Common myeloid progenitor, CD34-positive (primary cell): ENCODE measurements at regions of chr1 and their contacts with region 1.

Region 1: GRCh38 chr1:23367791-23368561 is 1.7 kb downstream of the ZNF436 start:
- DNase-seq: peak; percentile 99 to 100 (median 99)
- H3K4me3 ChIP-seq: peak overlapping the region; percentile 82 to 99 (median 94)
- H3K27ac ChIP-seq: peak overlapping the region; percentile 77 to 96
- H3K4me1 ChIP-seq: peaks cover 13 to 35% (median 29%) of the 10 kb centered on the region in 4 experiments
- H3K27me3 ChIP-seq: no peaks in the 10 kb centered on the region

Region 2: DNA sequence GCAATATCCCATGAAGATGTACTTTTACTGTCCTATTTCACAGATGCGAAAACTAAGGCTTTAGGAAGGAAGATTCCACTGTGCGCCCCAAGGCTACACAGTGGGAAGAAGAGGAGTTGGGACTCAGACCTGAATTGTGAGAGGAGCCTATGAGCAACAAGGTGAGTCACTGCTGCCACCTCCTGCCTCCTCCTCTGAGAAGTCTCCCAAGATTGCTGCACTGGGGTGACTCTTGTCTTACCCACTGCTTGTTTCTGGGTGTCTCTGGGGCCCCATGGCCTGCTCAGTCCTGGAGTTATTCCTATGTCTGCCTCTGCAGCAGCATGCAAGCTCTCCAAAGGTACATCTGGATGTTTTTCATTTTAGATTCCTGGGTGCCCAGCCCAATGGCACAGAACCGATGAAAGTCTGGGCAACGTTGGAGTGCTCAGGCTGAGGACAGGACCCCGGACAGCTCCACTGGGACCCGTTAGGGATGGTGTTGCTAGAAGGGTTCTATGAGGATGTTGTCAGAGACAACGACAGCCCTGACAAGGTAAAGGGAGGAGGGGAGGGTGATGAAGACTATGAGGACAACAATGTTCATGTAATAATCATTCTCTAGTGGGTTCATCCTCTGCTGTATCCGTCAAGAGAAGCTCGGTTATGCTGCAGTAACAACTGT is 742.6 kb before region 1 on chr1:
- CTCF ChIA-PET with region 1: no interaction called
- POLR2A ChIA-PET with region 1: no interaction called
- DNase-seq: peak in 2 of 3 donors; percentile 8 to 10
- H3K4me3 ChIP-seq: no peak overlapping the region
- H3K27ac ChIP-seq: no peak overlapping the region
- H3K4me1 ChIP-seq: no peaks in the 10 kb centered on the region
- H3K27me3 ChIP-seq: peaks cover 0 to 75% (median 9%) of the 10 kb centered on the region in 5 experiments

Region 3: GRCh38 chr1:23344111-23344986 is 23.6 kb before region 1 on chr1 and contains the start of gene HNRNPR:
- CTCF ChIA-PET with region 1: interaction called, 7 read pairs
- POLR2A ChIA-PET with region 1: interaction called, 21 read pairs
- DNase-seq: peak; percentile 100
- H3K4me3 ChIP-seq: peak within 1 kb of the TSS; percentile 77 to 94 (median 87)
- H3K27ac ChIP-seq: peak within 1 kb of the TSS; percentile 84 to 93
- H3K4me1 ChIP-seq: peaks cover 22 to 44% (median 31%) of the 10 kb centered on the region in 4 experiments
- H3K27me3 ChIP-seq: no peaks in the 10 kb centered on the region

Region 4: DNA sequence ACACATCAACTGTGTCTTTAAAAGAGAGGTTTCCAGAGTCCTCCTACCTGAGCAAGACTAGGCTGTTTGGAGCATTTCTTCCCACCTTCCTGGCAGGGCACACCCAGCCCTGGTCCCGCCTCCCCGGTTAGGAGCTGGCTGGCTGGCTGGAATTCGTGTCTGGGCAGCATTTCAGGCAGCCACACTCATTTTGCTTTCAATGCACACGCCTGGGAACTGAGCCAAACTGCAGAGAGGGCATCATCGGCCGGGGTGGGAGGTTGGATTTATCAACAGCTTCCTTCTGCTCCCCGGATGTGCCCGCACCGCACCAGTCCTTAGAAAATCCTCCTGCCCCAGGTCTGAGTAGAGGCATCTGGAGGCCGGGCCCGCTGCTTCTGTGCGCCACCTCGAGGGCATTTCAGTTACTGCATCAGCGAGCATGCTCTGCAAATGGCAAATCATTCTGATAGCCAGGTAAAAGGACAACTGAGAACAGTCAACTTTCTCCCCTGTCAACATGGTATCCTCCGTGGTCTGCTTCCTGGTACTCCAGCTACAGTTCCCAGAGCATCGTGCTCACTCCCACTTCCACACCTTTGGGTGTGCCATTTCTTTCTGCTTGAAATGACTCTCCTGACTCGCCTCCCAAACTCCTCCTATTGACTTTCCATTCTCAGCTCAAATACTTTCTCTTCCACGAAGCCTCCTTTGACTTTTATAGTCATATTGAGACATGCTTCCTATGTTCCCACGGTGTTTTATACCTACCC is 35.9 kb after region 1 on chr1:
- CTCF ChIA-PET with region 1: interaction called, 21 read pairs
- POLR2A ChIA-PET with region 1: no interaction called
- DNase-seq: peak; percentile 70 to 79 (median 78)
- H3K4me3 ChIP-seq: peak overlapping the region in 2 of 7 experiments; percentile 16 to 57
- H3K27ac ChIP-seq: no peak overlapping the region
- H3K4me1 ChIP-seq: peaks cover 0 to 18% (median 5%) of the 10 kb centered on the region in 4 experiments
- H3K27me3 ChIP-seq: no peaks in the 10 kb centered on the region